ENCODE measurements at regions of chr1 and their contacts with region 1.

Region 1: DNA sequence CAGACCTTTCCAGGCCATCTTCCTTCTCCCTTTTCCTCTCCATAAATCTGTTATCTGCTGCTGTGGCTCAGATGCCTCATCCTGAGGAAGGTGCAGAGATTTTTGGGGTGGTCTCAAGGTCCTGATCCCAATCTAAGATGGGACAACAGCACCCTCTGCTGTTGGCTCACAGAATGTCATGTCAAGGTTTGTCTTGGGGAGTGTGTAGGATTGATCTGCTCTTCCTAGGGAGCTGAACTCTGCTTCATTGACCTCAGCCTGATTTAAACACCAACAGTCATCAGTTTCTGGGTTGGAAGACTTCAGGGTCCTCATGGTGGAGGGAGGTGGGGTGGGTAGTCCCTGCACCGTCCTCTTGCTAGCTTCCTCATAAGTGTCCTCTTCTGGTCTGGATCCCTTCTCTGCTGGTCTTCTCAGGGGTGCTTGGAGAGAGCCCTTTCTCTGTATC is 62.8 kb upstream of the LAX1 start:
- DNase-seq: peak in 8 of 10 donors; percentile 15 to 90 (median 69)

Region 2: DNA sequence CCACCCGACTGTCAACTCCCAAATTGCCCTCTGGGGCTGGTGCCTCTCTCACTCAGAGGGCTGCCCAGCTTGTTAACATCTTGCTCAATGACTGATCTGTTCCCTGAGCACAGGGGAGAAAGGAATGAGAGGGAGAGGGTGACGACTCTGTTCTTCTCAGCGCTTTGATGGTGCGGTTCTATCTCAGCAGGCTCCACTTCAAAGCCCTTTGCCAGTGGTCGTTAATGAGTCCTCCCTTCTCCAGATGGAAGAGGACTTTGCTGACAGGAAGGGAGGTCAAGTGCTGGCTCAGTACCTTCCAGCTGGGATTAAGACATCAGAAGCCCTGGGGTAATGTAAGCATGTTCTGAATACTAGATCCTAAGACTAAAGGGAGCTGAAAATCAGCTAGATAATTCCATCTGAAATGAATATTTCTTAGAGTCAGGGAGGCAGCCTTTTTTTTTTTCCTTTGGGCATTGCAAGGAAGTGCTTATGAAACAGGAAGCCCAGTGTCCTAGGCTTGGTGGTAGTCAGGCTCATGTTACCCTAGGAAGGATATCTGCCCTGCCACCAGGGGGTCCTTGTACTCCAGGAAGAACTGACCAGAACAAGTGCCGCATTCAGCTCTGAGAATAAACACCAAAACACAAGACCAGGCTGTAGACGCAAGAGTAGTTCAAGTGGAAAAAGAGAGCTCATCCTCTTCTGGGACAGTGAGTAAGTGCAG is 355.9 kb before region 1 on chr1:
- intact Hi-C with region 1: loop called (anchors 5 kb)
- DNase-seq: no peak

Region 3: GRCh38 chr1:203504397-203505250 is 197.5 kb before region 1 on chr1:
- intact Hi-C with region 1: loop called (anchors 1 kb)
- DNase-seq: peak; percentile 43 to 95 (median 82)

Region 4: GRCh38 chr1:203625628-203626019 is 76.5 kb before region 1 on chr1:
- intact Hi-C with region 1: loop called (anchors 1 kb)
- DNase-seq: peak in 3 of 10 donors; percentile 17 to 62 (median 42)

Measured in posterior cingulate gyrus (tissue), 11 donors.